ENCODE measurements at regions of chrX and their contacts with region 1.

Region 1: GRCh38 chrX:47523297-47523696 is 37.7 kb upstream of the ARAF start:
- DNase-seq: peak; percentile 79 to 91 (median 88)
- H3K4me3 ChIP-seq: peak overlapping the region; percentile 50
- H3K27ac ChIP-seq: no peak overlapping the region
- H3K4me1 ChIP-seq: no peaks in the 10 kb centered on the region
- H3K27me3 ChIP-seq: no peaks in the 10 kb centered on the region
- CTCF ChIP-seq: peak; percentile 54 to 76 (median 65)
- EP300 ChIP-seq: no peak
- POLR2A ChIP-seq: no peak

Region 2: DNA sequence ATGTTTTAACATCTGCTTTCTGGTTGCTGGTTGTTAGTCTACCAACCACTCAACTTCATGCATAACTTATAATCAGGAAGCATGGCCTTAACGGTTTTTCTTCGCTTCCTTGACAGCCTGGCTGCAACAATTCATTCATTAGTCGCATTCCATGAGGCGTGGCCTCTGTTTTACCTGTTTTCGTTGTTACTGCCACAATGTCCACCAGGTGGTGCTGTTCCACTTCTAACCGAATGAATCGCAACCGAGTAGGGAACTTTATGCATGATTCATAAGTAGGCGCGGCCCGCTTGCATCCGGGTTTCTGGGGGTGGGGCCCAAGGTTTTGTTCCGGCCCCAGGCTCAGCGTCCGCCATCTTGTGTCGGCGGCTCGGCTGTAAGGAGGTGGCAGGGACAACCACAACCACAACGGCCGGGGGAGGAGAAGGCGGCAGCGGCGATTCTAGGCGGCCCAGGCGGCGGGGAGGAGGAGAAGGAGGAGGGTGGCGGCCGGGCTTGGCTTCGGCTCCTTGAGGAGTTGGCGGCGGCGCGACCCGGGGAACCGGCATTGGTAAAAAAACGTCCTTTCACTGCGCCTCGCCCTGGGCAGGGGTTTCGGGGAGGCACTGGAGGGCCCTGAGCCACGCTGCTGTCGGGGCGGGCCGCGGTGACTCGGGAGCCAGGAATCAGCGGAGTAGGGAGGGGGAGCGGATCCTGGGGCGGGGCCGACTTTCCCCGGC is 329.7 kb before region 1 on chrX and contains the start of gene UBA1:
- intact Hi-C with region 1: loop called in 3 of 4 experiments (anchors 5 kb)
- DNase-seq: peak; percentile 97 to 98 (median 97)
- H3K4me3 ChIP-seq: peak within 1 kb of the TSS; percentile 94
- H3K27ac ChIP-seq: peak within 1 kb of the TSS; percentile 84 to 87
- H3K4me1 ChIP-seq: peaks cover 4% of the 10 kb centered on the region
- H3K27me3 ChIP-seq: no peaks in the 10 kb centered on the region
- CTCF ChIP-seq: peak; percentile 73 to 95 (median 94)
- EP300 ChIP-seq: no peak
- POLR2A ChIP-seq: peak; percentile 92
- total RNA-seq, gene UBA1: 91.8 to 196 (median 177) TPM